HEK293 (cell line): ENCODE measurements at regions of chr20 and their contacts with region 1.

Region 1: DNA sequence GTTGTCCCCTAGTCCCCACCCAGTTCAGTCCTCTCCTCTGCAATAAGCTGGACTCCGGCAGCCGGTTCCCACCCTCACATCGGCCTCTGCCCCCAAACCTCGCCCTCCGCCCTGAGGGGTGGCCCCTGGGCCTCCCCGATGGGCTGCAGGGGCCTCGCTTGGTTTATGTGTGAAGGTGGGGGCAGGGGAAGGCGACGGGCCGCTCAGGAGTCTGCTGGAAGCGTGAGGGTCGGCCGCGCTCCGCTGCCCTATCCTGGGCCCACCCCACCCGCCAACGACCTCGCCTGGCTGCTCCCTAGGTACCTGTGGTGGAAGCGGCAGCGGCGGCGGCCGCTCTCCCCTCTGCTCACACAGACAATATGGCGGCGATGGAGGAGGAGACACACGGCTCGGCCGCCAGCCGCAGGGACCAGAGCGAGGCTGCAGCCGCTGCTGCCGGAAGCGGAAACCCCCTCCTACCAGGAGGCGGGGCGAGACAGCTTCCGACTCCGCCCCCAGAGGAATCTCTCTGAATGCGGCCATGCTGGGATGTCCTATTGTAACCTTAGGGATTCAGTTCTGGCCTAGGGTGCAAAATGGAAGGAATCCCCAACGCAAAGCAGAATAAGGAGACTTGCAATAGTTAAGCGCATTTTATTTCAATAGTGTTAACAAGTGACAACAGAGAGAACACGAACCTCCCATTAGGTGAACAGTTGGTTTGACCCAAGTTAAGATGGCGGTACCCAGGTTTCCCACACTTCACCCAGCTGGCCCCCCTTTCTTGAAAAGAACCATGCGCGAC is at the start of gene CSNK2A1:
- H3K4me3 ChIP-seq: peak within 1 kb of the TSS; percentile 93
- H3K27ac ChIP-seq: peak within 1 kb of the TSS; percentile 94
- H3K4me1 ChIP-seq: 0 out of 2 replicates have a peak, but pooled peaks cover 2% of the 10 kb centered on the region
- CTCF ChIP-seq: no peak

Region 2: DNA sequence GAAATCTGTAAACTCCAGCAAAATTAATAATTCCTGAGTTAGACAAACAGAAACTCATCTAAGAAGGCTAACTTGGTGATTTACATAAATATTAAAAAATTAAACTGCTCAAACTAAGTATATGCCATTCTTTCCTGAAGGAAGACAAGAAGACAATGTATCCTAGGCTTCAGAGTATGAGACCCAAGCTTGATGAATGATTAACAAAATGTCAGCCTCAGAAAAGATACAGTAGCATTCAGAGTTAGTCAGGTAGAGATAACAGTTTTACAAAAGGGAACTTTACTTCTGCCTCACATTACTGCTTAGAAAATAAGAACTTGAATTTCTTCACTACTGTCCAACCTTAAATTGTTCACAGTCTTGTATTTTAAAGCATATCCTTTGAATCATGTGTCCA is 12.0 kb before region 1 on chr20:
- CTCF ChIA-PET with region 1: interaction called, 3 read pairs
- POLR2A ChIA-PET with region 1: interaction called, 11 read pairs
- H3K4me3 ChIP-seq: no peak overlapping the region
- H3K27ac ChIP-seq: no peak overlapping the region
- H3K4me1 ChIP-seq: peaks cover 17% of the 10 kb centered on the region
- CTCF ChIP-seq: no peak

Region 3: GRCh38 chr20:555933-556526 is 12.5 kb after region 1 on chr20:
- CTCF ChIA-PET with region 1: interaction called, 6 read pairs
- POLR2A ChIA-PET with region 1: interaction called, 15 read pairs
- H3K4me3 ChIP-seq: no peak overlapping the region
- H3K27ac ChIP-seq: no peak overlapping the region
- H3K4me1 ChIP-seq: peaks cover 6% of the 10 kb centered on the region
- CTCF ChIP-seq: no peak

Region 4: DNA sequence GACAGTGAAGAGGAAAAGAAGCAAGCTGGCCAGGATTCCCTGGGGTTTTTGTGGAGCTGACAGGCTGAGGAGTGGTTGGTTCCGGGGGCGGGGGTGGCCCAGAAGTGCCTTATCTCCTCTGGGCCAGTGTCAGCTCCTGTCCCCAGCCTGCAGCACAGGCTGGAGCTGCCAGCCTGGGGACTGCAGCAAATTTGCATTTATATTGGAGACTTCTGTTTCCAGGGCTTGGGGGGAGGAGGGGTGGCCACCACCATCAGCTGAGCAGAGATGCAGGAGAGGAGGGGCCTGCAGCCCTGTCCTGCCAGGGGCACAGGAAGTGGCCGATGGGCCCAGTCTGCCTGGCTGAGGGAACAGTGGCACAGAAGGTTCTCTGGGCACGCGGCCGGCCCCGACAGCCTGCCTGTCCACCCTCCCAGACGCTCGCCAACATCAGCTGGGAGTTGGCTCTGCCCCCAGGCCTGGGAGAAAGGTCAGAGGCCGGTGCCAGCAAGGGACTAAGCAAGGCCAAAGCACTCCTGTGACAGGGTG is 156.3 kb after region 1 on chr20:
- CTCF ChIA-PET with region 1: no interaction called
- POLR2A ChIA-PET with region 1: no interaction called
- H3K4me3 ChIP-seq: no peak overlapping the region
- H3K27ac ChIP-seq: no peak overlapping the region
- H3K4me1 ChIP-seq: no peaks in the 10 kb centered on the region
- CTCF ChIP-seq: no peak